Left cardiac atrium (tissue), 4 donors: ENCODE measurements at regions of chr10 and their contacts with region 1.

Region 1: DNA sequence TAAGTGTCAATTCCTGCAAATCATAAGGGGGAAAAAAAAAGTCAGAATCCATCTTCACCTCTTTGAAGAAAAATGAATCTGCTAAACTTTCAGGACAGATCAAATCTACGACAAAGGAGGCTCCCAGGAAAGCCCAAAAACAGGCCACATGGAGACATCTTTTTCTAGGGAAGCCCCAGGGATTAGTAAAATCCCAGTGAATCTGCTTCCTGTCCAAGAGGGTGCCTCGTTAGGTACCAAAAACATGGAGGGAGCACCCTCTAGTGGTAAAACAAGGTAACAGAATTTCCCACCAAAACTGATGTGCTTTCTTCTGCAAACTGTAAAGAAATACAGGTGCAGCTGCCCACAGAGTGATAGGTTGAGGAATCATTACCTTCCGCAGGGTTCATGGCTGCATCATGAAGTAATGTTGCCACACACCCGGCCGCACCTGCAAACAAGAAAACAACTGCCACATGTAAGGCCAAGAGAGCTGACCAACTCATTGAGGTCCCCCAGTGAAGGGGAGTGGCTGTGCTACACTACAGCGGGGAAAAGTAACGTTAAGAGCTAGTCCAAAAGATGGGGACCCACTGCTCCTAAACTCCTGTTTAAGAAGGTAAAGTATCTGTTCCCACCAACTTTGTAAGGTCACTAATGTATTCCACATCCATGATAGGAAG is 7.9 kb downstream of the SLC25A28 start:
- DNase-seq: no peak
- ATAC-seq: peak; percentile 62 to 69

Region 2: GRCh38 chr10:99394761-99395386 is 217.4 kb before region 1 on chr10:
- intact Hi-C with region 1: loop called in 1 of 2 experiments (anchors 5 kb)
- DNase-seq: no peak
- ATAC-seq: no peak

Region 3: DNA sequence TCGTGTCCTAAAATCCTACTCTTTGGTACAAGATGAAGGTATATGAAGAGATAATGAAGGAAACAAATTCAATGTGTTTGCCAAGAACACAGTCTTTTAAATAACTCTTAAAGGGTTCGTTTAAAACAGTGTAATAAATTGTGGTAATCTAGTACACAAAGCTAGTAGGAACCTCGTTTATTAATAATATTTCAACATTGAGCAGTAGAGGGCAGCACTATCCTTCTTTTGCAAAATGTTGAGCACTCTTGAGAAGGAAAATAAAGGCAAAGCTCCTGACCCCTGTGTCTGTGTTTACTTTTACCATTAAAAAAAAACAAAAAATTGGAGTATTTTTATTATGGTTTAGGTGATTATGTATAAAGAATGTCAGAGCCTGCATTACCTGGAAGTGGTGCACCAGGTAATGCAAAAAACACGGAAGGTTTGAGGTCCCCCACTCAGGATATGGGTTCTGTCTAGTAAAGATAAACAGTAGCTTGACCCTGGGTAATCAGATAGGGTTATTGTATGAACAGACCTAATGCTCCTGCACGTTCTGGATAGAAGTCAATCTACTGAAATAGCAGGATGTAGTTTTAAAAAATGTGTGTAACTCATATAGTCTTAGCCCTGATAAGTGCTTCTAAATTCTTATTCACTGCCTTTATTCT is 176.2 kb before region 1 on chr10:
- intact Hi-C with region 1: loop called (anchors 2 to 5 kb)
- DNase-seq: no peak
- ATAC-seq: peak in 1 of 2 donors; percentile 21